A673 (cell line): ENCODE measurements at regions of chr2 and their contacts with region 1.

Region 1: GRCh38 chr2:196171248-196171871 is at the start of gene STK17B:
- DNase-seq: peak; percentile 96
- H3K4me3 ChIP-seq: peak within 1 kb of the TSS; percentile 99
- H3K27ac ChIP-seq: peak within 1 kb of the TSS; percentile 85
- H3K4me1 ChIP-seq: peaks cover 33% of the 10 kb centered on the region
- H3K27me3 ChIP-seq: no peaks in the 10 kb centered on the region
- CTCF ChIP-seq: 0 out of 2 replicates have a peak, but pooled peaks have one; percentile 25
- total RNA-seq, gene STK17B: 18.4 and 18.5 TPM in 2 replicates

Region 2: DNA sequence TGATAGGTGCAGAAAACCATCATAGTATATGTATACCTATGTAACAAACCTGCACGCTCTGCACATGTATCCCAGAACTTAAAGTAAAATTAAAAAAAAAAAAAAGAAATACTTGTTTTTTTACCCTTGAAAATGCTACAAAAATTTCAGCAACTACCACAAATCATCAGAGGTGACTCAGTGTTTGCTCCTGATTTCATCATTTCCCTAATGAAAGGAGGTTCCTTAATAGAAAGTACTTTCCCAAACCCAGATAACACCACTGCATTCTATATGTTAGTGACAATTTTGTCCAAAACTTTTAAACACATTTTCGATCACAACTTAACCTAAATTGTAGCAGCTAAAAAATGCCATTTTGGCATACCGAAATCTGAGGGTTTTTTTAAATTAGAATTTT is 351.0 kb before region 1 on chr2:
- CTCF ChIA-PET with region 1: no interaction called
- POLR2A ChIA-PET with region 1: no interaction called
- intact Hi-C with region 1: no loop called
- DNase-seq: peak; percentile 20
- H3K4me3 ChIP-seq: no peak overlapping the region
- H3K27ac ChIP-seq: peak overlapping the region; percentile 75
- H3K4me1 ChIP-seq: peaks cover 4% of the 10 kb centered on the region
- H3K27me3 ChIP-seq: no peaks in the 10 kb centered on the region
- CTCF ChIP-seq: no peak

Region 3: DNA sequence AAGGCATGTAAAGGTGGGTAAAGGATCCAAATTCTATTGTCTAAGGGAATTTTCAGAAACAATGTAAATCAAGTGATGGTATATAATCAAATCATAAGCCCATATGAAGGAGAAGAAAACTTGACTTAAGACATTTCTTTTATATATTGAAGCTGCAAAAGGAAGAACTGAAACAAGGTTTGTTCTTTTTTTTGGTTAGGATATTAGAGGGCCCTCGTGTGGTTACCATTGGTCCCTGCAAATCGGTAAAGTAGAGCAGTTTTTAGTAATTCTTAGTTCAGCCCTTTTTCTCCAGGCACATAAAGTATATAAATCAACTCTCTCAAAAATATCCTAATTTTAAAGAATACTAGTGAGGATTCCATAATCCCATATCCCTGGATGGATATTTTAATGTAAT is 105.6 kb after region 1 on chr2:
- CTCF ChIA-PET with region 1: no interaction called
- POLR2A ChIA-PET with region 1: no interaction called
- intact Hi-C with region 1: loop called (anchors 2 kb)
- DNase-seq: peak; percentile 59
- H3K4me3 ChIP-seq: no peak overlapping the region
- H3K27ac ChIP-seq: no peak overlapping the region
- H3K4me1 ChIP-seq: peaks cover 13% of the 10 kb centered on the region
- H3K27me3 ChIP-seq: no peaks in the 10 kb centered on the region
- CTCF ChIP-seq: peak; percentile 77